ENCODE measurements at regions of chr1 and their contacts with region 1.

Region 1: DNA sequence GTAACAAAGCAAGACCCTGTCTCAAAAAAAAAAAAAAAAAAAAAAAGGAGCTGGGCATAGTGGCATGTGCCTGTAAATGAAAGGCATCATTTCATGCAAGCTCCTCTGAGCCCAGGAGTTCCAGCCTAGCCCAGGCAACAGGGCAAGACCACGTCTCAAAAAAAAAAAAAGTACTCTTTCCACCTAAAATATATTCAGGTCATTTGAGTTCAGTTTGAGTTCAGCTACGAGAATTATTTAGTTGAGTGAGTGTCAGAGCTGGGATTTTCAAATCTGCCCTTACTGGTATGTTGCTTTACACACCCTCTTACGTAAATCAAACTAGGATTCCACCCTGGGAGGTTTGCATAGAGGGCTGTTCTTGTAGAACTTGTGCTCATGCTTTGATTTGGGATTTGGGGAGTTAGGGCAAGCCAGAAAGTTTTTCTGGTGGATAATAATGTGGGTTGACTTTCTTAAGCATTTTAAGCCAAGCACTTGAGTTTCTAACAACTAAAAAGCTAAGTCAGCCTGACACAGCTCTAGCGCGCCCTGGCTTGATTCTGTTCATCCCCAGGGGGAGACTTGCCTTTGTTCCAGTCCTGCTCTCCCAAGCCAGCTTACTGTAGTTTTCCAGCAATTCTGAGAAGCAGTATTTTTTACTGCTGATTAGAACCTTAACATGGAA is 11.3 kb upstream of the PGD start:
- DNase-seq: peak; percentile 33
- H3K4me3 ChIP-seq: no peak overlapping the region; the same call in 1 of the 2 replicates
- H3K27ac ChIP-seq: peak overlapping the region; percentile 94
- H3K27me3 ChIP-seq: no peaks in the 10 kb centered on the region
- CTCF ChIP-seq: peak; percentile 33

Region 2: GRCh38 chr1:9326596-9326995 is 1061.0 kb before region 1 on chr1:
- CTCF ChIA-PET with region 1: no interaction called
- POLR2A ChIA-PET with region 1: no interaction called
- DNase-seq: peak; percentile 77
- H3K4me3 ChIP-seq: 0 out of 2 replicates have a peak overlapping the region, but pooled peaks have one; percentile 10
- H3K27ac ChIP-seq: peak overlapping the region; percentile 92
- H3K27me3 ChIP-seq: no peaks in the 10 kb centered on the region
- CTCF ChIP-seq: no peak

Region 3: DNA sequence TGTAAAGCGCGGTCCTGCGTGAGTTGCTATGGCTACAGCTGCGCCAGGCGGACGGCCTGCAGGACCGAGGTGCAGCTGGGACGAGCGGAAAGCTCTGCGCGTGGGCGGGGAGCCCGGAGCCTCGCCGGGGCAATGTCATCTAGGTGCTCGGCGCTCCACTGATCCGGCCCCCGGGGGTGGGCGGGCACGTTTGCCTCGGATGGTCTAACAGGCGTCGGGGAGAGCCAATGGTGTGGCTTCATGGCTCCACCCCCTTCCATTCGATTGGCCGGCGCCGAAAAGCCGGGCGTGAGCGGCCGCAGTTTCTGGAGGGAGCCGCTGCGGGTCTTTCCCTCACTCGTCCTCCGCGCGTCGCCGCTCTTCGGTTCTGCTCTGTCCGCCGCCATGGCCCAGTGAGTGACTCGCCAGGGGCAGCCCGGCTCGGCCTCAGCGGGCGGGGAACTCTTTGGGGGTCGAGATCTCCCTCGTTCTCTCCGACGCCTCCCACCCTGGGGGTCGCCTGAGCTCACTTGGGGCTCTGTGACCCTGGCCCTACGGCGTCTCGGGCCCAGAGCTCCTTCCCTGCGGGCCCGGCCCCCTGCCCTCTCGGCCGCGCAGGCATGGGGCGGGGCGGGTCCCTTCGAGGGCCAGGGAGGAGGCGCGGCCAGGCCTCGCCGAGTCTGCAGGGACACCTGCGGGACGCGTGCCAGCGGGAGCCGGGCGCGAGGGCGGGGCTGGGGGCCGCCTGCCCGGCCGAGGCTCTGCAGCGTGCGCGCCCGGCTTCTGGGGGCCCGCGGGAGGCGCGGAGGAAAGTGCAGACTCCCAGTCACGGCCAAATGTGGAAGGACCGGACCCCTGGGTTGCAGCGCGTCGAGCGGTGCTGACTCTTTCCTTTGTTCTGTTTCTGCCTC is 11.4 kb after region 1 on chr1 and contains the start of gene PGD:
- CTCF ChIA-PET with region 1: interaction called, 12 read pairs
- POLR2A ChIA-PET with region 1: interaction called, 72 read pairs
- DNase-seq: peak; percentile 97
- H3K4me3 ChIP-seq: peak within 1 kb of the TSS; percentile 92
- H3K27ac ChIP-seq: peak within 1 kb of the TSS; percentile 91
- H3K27me3 ChIP-seq: no peaks in the 10 kb centered on the region
- CTCF ChIP-seq: no peak
- polyA plus RNA-seq, gene PGD: 155 and 233 TPM in 2 replicates

Region 4: DNA sequence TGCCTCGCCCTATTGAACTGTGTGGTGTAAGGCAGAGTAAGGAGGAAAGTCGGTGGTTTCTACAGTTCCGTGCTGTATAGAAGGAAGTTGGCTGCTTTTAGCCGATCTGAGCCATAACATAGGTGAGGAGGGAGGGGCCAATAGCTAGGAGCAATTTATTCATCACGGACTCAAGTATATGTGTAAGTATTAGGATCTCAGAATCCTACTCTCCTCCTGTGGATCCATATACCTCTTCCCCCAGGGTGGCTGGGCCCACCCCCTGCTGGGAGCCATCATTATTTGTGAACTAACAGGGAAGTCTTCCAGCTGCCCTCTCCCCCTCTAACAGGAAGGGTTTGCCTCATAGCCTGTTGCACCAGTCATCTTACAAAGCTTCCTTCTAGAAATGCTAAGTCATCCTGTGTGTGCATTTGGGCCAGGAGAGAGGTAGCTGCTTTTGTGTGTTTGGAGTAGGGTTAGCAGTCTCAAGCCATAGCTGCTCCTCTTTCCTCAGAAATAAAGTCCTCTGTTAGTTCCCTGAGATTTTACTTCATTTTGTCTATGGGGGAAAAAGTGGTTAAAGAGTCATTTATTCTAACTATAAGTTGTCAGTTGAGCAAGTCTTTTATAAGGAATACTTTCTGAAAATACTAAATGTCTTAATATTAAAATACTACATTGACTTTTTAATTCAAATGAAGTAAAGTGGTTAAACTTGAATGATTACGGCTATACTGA is 27.8 kb after region 1 on chr1:
- CTCF ChIA-PET with region 1: interaction called, 3 read pairs
- POLR2A ChIA-PET with region 1: interaction called, 10 read pairs
- DNase-seq: peak; percentile 76
- H3K4me3 ChIP-seq: no peak overlapping the region
- H3K27ac ChIP-seq: peak overlapping the region; percentile 75
- H3K27me3 ChIP-seq: no peaks in the 10 kb centered on the region
- CTCF ChIP-seq: no peak

Region 5: GRCh38 chr1:10430216-10431069 is 42.9 kb after region 1 on chr1 and contains the start of gene CENPS:
- CTCF ChIA-PET with region 1: interaction called, 14 read pairs
- POLR2A ChIA-PET with region 1: interaction called, 4 read pairs
- DNase-seq: peak; percentile 55
- H3K4me3 ChIP-seq: peak within 1 kb of the TSS; percentile 87
- H3K27ac ChIP-seq: peak within 1 kb of the TSS; percentile 68
- H3K27me3 ChIP-seq: no peaks in the 10 kb centered on the region
- CTCF ChIP-seq: peak; percentile 86
- polyA plus RNA-seq, gene CENPS: 10.5 and 11.4 TPM in 2 replicates